ENCODE measurements at regions of chr11 and their contacts with region 1.

Region 1: GRCh38 chr11:129750349-129751292 is 65.0 kb upstream of the TMEM45B start:
- H3K4me3 Mint-ChIP-seq: peak overlapping the region; percentile 64
- H3K27ac Mint-ChIP-seq: no peak overlapping the region
- H3K4me1 Mint-ChIP-seq: peaks cover 9% of the 10 kb centered on the region
- H3K27me3 Mint-ChIP-seq: peaks cover 55% of the 10 kb centered on the region

Region 2: DNA sequence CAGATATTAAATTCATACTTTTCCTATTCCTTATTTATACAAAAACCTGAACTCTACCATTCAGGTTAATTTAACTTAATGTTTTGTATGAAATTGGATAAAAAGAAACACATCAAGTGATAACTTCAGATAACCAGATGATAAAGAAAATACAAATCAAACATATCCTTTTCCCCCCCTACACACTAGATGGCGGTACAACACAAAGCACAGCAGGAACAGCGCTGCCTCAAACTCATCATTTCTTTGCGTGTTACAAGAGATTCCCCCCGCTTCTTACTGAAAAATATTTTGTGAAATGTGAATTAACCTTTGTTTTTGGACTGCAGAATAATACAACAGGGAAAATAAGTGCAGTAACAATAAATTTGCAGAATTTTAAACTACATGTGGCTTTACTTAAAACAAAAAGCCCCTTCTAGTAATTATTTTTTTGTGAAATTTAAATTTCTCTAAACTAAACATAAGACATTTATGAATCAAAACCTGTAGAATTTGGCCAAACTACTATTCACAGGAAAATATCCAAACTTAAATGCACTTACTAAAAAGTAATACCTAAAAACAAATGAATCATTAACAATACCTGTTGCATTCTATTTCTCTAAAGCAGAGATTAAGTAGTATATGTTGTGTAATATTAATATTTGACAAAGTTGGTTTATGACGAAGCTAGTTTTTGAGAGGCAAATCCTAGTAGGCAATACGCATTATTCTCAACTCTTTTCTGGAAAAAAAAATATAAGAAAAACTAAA is 632.8 kb before region 1 on chr11:
- intact Hi-C with region 1: loop called (anchors 1 kb)
- H3K4me3 Mint-ChIP-seq: no peak overlapping the region
- H3K27ac Mint-ChIP-seq: no peak overlapping the region
- H3K4me1 Mint-ChIP-seq: no peaks in the 10 kb centered on the region
- H3K27me3 Mint-ChIP-seq: no peaks in the 10 kb centered on the region

Region 3: DNA sequence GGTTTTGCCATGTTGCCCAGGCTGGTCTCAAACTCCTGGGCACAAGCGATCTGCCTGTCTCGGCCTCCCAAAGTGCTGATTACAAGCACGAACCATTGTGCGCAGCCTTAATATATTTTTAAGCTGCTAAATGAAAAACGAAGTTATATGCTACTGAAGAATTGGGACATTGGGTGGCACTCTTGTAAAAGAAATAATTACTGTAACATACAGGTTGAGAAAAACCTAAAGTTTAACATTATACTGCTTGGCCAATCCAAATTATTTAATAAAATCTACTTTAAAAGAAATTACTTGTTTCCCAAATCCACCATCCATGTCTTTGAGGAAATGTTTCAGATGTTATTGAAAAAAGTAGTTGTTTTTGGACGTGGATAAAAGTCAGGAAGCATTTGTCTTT is 520.6 kb before region 1 on chr11:
- intact Hi-C with region 1: loop called (anchors 5 kb)
- H3K4me3 Mint-ChIP-seq: no peak overlapping the region
- H3K27ac Mint-ChIP-seq: no peak overlapping the region
- H3K4me1 Mint-ChIP-seq: no peaks in the 10 kb centered on the region
- H3K27me3 Mint-ChIP-seq: no peaks in the 10 kb centered on the region

Region 4: DNA sequence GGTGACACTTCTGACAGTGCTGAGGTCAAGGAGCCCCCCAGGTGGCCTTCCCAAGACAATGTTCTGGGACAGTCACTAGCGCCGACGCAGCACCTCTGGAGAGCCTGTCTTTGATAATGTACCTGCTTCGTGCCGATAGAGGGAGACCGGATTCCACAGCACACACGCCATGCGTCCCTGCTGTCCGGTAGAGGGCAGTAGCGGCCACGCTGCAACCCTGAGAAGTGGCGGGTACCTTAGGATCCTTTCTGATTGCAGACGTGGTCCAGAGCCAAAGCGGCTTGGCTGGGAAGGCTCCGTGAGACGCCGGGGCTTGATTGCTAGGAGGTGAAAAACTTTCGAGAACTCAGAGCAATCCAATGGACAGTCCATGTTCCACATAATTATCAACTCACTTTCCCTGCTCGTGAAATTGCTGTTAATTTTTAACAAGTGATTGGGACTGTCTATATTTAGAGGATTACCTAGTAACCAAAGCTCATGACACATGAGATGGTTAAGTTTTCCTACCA is 386.4 kb before region 1 on chr11:
- intact Hi-C with region 1: loop called (anchors 2 kb)
- H3K4me3 Mint-ChIP-seq: no peak overlapping the region
- H3K27ac Mint-ChIP-seq: no peak overlapping the region
- H3K4me1 Mint-ChIP-seq: no peaks in the 10 kb centered on the region
- H3K27me3 Mint-ChIP-seq: peaks cover 43% of the 10 kb centered on the region

Region 5: GRCh38 chr11:129691142-129691541 is 59.5 kb before region 1 on chr11:
- intact Hi-C with region 1: no loop called
- H3K4me3 Mint-ChIP-seq: no peak overlapping the region
- H3K27ac Mint-ChIP-seq: no peak overlapping the region
- H3K4me1 Mint-ChIP-seq: peaks cover 6% of the 10 kb centered on the region
- H3K27me3 Mint-ChIP-seq: peaks cover 15% of the 10 kb centered on the region